Mammary epithelial cell (primary cell): ENCODE measurements at regions of chr10 and their contacts with region 1.

Region 1: GRCh38 chr10:3763035-3763456 is 22.0 kb downstream of the KLF6 start:
- DNase-seq: peak; percentile 99
- H3K4me3 ChIP-seq: no peak overlapping the region
- H3K27ac ChIP-seq: peak overlapping the region; percentile 94
- H3K4me1 ChIP-seq: peaks cover 60% of the 10 kb centered on the region
- H3K27me3 ChIP-seq: no peaks in the 10 kb centered on the region
- CTCF ChIP-seq: no peak

Region 2: GRCh38 chr10:3668276-3668965 is 94.6 kb before region 1 on chr10:
- CTCF ChIA-PET with region 1: no interaction called
- dilution Hi-C with region 1: no loop called
- in situ Hi-C with region 1: no loop called
- intact Hi-C with region 1: loop called (anchors 1 kb)
- DNase-seq: peak; percentile 89
- H3K4me3 ChIP-seq: peak overlapping the region; percentile 22 to 34 (median 32)
- H3K27ac ChIP-seq: peak overlapping the region; percentile 86
- H3K4me1 ChIP-seq: peaks cover 11% of the 10 kb centered on the region
- H3K27me3 ChIP-seq: no peaks in the 10 kb centered on the region
- CTCF ChIP-seq: no peak

Region 3: GRCh38 chr10:3740157-3740871 is 22.7 kb before region 1 on chr10:
- CTCF ChIA-PET with region 1: interaction called, 4 read pairs
- dilution Hi-C with region 1: no loop called
- in situ Hi-C with region 1: no loop called
- intact Hi-C with region 1: loop called (anchors 1 kb)
- DNase-seq: peak; percentile 95
- H3K4me3 ChIP-seq: no peak overlapping the region
- H3K27ac ChIP-seq: peak overlapping the region; percentile 81
- H3K4me1 ChIP-seq: peaks cover 22% of the 10 kb centered on the region
- H3K27me3 ChIP-seq: no peaks in the 10 kb centered on the region
- CTCF ChIP-seq: no peak

Region 4: GRCh38 chr10:3935141-3935540 is 172.1 kb after region 1 on chr10:
- CTCF ChIA-PET with region 1: no interaction called
- dilution Hi-C with region 1: no loop called
- in situ Hi-C with region 1: no loop called
- intact Hi-C with region 1: no loop called
- DNase-seq: peak; percentile 77
- H3K4me3 ChIP-seq: peak overlapping the region; percentile 20 to 31 (median 31)
- H3K27ac ChIP-seq: peak overlapping the region; percentile 63
- H3K4me1 ChIP-seq: peaks cover 6% of the 10 kb centered on the region
- H3K27me3 ChIP-seq: no peaks in the 10 kb centered on the region
- CTCF ChIP-seq: peak in 1 of 2 donors; percentile 16